PC-9 (cell line): ENCODE measurements at regions of chr6 and their contacts with region 1.

Region 1: GRCh38 chr6:21565431-21565830 is 28.1 kb upstream of the SOX4 start:
- DNase-seq: no peak
- H3K4me3 ChIP-seq: no peak overlapping the region
- H3K27ac ChIP-seq: no peak overlapping the region
- H3K4me1 ChIP-seq: no peaks in the 10 kb centered on the region
- H3K27me3 ChIP-seq: no peaks in the 10 kb centered on the region
- CTCF ChIP-seq: no peak

Region 2: GRCh38 chr6:21297665-21298064 is 267.8 kb before region 1 on chr6:
- CTCF ChIA-PET with region 1: interaction called, 11 read pairs
- POLR2A ChIA-PET with region 1: no interaction called
- intact Hi-C with region 1: no loop called
- DNase-seq: no peak
- H3K4me3 ChIP-seq: no peak overlapping the region
- H3K27ac ChIP-seq: no peak overlapping the region
- H3K4me1 ChIP-seq: no peaks in the 10 kb centered on the region
- H3K27me3 ChIP-seq: no peaks in the 10 kb centered on the region
- CTCF ChIP-seq: no peak

Region 3: GRCh38 chr6:21554286-21554685 is 11.1 kb before region 1 on chr6:
- CTCF ChIA-PET with region 1: no interaction called
- POLR2A ChIA-PET with region 1: no interaction called
- intact Hi-C with region 1: no loop called
- DNase-seq: no peak
- H3K4me3 ChIP-seq: no peak overlapping the region
- H3K27ac ChIP-seq: no peak overlapping the region
- H3K4me1 ChIP-seq: no peaks in the 10 kb centered on the region
- H3K27me3 ChIP-seq: no peaks in the 10 kb centered on the region
- CTCF ChIP-seq: no peak